ENCODE measurements at regions of chr6 and their contacts with region 1.

Region 1: GRCh38 chr6:13487122-13488014 is at the start of gene GFOD1:
- DNase-seq: peak; percentile 89
- ATAC-seq: peak; percentile 81
- H3K4me3 ChIP-seq: peak within 1 kb of the TSS; percentile 51 to 73 (median 66)
- H3K4me3 Mint-ChIP-seq: peak within 1 kb of the TSS; percentile 95
- H3K27ac ChIP-seq: peak within 1 kb of the TSS; percentile 57 to 60
- H3K27ac Mint-ChIP-seq: peak within 1 kb of the TSS; percentile 97
- H3K4me1 ChIP-seq: peaks cover 19 to 38% of the 10 kb centered on the region in 2 donors
- H3K4me1 Mint-ChIP-seq: peaks cover 42% of the 10 kb centered on the region
- H3K27me3 ChIP-seq: no peaks in the 10 kb centered on the region
- H3K27me3 Mint-ChIP-seq: no peaks in the 10 kb centered on the region
- CTCF ChIP-seq: no peak
- total RNA-seq, gene GFOD1: 42.4 and 44.6 TPM in 2 replicates

Region 2: GRCh38 chr6:12957321-12958051 is 529.9 kb before region 1 on chr6:
- CTCF ChIA-PET with region 1: no interaction called
- POLR2A ChIA-PET with region 1: no interaction called
- intact Hi-C with region 1: no loop called
- DNase-seq: peak; percentile 46
- ATAC-seq: peak; percentile 14
- H3K4me3 ChIP-seq: peak overlapping the region; percentile 58 to 80 (median 77)
- H3K4me3 Mint-ChIP-seq: peak overlapping the region; percentile 91
- H3K27ac ChIP-seq: peak overlapping the region in 1 of 2 donors; percentile 24
- H3K27ac Mint-ChIP-seq: no peak overlapping the region
- H3K4me1 ChIP-seq: peaks cover 13 to 18% of the 10 kb centered on the region in 2 donors
- H3K4me1 Mint-ChIP-seq: peaks cover 19% of the 10 kb centered on the region
- H3K27me3 ChIP-seq: peaks cover 0 to 26% (median 11%) of the 10 kb centered on the region in 4 experiments
- H3K27me3 Mint-ChIP-seq: peaks cover 40% of the 10 kb centered on the region
- CTCF ChIP-seq: no peak

Region 3: GRCh38 chr6:13355043-13355951 is 132.1 kb before region 1 on chr6:
- CTCF ChIA-PET with region 1: interaction called, 5 read pairs
- POLR2A ChIA-PET with region 1: interaction called, 12 read pairs
- intact Hi-C with region 1: loop called (anchors 1 kb)
- DNase-seq: peak; percentile 73
- ATAC-seq: peak; percentile 34
- H3K4me3 ChIP-seq: peak overlapping the region; percentile 30 to 69 (median 37)
- H3K4me3 Mint-ChIP-seq: peak overlapping the region; percentile 80
- H3K27ac ChIP-seq: peak overlapping the region; percentile 91 to 99
- H3K27ac Mint-ChIP-seq: peak overlapping the region; percentile 92
- H3K4me1 ChIP-seq: peaks cover 59 to 74% of the 10 kb centered on the region in 2 donors
- H3K4me1 Mint-ChIP-seq: peaks cover 72% of the 10 kb centered on the region
- H3K27me3 ChIP-seq: no peaks in the 10 kb centered on the region
- H3K27me3 Mint-ChIP-seq: no peaks in the 10 kb centered on the region
- CTCF ChIP-seq: no peak

Region 4: GRCh38 chr6:13427801-13428582 is 59.4 kb before region 1 on chr6:
- CTCF ChIA-PET with region 1: interaction called, 6 read pairs
- POLR2A ChIA-PET with region 1: interaction called, 3 read pairs
- intact Hi-C with region 1: loop called (anchors 1 kb)
- DNase-seq: peak; percentile 91
- ATAC-seq: peak; percentile 85
- H3K4me3 ChIP-seq: peak overlapping the region in 4 of 5 experiments; percentile 7 to 46 (median 26)
- H3K4me3 Mint-ChIP-seq: peak overlapping the region; percentile 82
- H3K27ac ChIP-seq: peak overlapping the region; percentile 83 to 86
- H3K27ac Mint-ChIP-seq: peak overlapping the region; percentile 95
- H3K4me1 ChIP-seq: peaks cover 41 to 75% of the 10 kb centered on the region in 2 donors
- H3K4me1 Mint-ChIP-seq: peaks cover 67% of the 10 kb centered on the region
- H3K27me3 ChIP-seq: no peaks in the 10 kb centered on the region
- H3K27me3 Mint-ChIP-seq: no peaks in the 10 kb centered on the region
- CTCF ChIP-seq: peak; percentile 66

Region 5: GRCh38 chr6:13470238-13471140 is 16.9 kb before region 1 on chr6:
- CTCF ChIA-PET with region 1: no interaction called
- POLR2A ChIA-PET with region 1: interaction called, 11 read pairs
- intact Hi-C with region 1: loop called (anchors 2 kb)
- DNase-seq: no peak
- ATAC-seq: peak; percentile 57
- H3K4me3 ChIP-seq: no peak overlapping the region
- H3K4me3 Mint-ChIP-seq: no peak overlapping the region
- H3K27ac ChIP-seq: no peak overlapping the region
- H3K27ac Mint-ChIP-seq: no peak overlapping the region
- H3K4me1 ChIP-seq: peaks cover 24 to 48% of the 10 kb centered on the region in 2 donors
- H3K4me1 Mint-ChIP-seq: peaks cover 66% of the 10 kb centered on the region
- H3K27me3 ChIP-seq: no peaks in the 10 kb centered on the region
- H3K27me3 Mint-ChIP-seq: no peaks in the 10 kb centered on the region
- CTCF ChIP-seq: no peak

Region 6: GRCh38 chr6:13538084-13538483 is 50.7 kb after region 1 on chr6:
- CTCF ChIA-PET with region 1: interaction called, 41 read pairs
- POLR2A ChIA-PET with region 1: interaction called, 4 read pairs
- intact Hi-C with region 1: loop called (anchors 2 kb)
- DNase-seq: peak; percentile 64
- ATAC-seq: peak; percentile 56
- H3K4me3 ChIP-seq: no peak overlapping the region
- H3K4me3 Mint-ChIP-seq: no peak overlapping the region
- H3K27ac ChIP-seq: no peak overlapping the region
- H3K27ac Mint-ChIP-seq: no peak overlapping the region
- H3K4me1 ChIP-seq: peaks cover 6 to 8% of the 10 kb centered on the region in 2 donors
- H3K4me1 Mint-ChIP-seq: peaks cover 17% of the 10 kb centered on the region
- H3K27me3 ChIP-seq: no peaks in the 10 kb centered on the region
- H3K27me3 Mint-ChIP-seq: no peaks in the 10 kb centered on the region
- CTCF ChIP-seq: peak; percentile 54

Region 7: GRCh38 chr6:13711733-13712598 is 224.6 kb after region 1 on chr6 and contains the start of gene RANBP9:
- CTCF ChIA-PET with region 1: no interaction called
- POLR2A ChIA-PET with region 1: no interaction called
- intact Hi-C with region 1: loop called (anchors 2 kb)
- DNase-seq: peak; percentile 94
- ATAC-seq: peak; percentile 82
- H3K4me3 ChIP-seq: peak within 1 kb of the TSS; percentile 58 to 88 (median 78)
- H3K4me3 Mint-ChIP-seq: peak within 1 kb of the TSS; percentile 96
- H3K27ac ChIP-seq: peak within 1 kb of the TSS; percentile 80 to 84
- H3K27ac Mint-ChIP-seq: peak within 1 kb of the TSS; percentile 96
- H3K4me1 ChIP-seq: peaks cover 29 to 33% of the 10 kb centered on the region in 2 donors
- H3K4me1 Mint-ChIP-seq: peaks cover 41% of the 10 kb centered on the region
- H3K27me3 ChIP-seq: no peaks in the 10 kb centered on the region
- H3K27me3 Mint-ChIP-seq: no peaks in the 10 kb centered on the region
- CTCF ChIP-seq: no peak
- total RNA-seq, gene RANBP9: 34.1 and 39.0 TPM in 2 replicates